Mucosa of descending colon (tissue), 3 donors: ENCODE measurements at regions of chr18 and their contacts with region 1.

Region 1: GRCh38 chr18:34661464-34662111 is 48.5 kb upstream of the DTNA start:
- DNase-seq: peak in 1 of 3 donors; percentile 28
- ATAC-seq: peak; percentile 74
- H3K4me3 ChIP-seq: no peak overlapping the region
- H3K4me1 ChIP-seq: no peaks in the 10 kb centered on the region
- CTCF ChIP-seq: peak; percentile 55

Region 2: DNA sequence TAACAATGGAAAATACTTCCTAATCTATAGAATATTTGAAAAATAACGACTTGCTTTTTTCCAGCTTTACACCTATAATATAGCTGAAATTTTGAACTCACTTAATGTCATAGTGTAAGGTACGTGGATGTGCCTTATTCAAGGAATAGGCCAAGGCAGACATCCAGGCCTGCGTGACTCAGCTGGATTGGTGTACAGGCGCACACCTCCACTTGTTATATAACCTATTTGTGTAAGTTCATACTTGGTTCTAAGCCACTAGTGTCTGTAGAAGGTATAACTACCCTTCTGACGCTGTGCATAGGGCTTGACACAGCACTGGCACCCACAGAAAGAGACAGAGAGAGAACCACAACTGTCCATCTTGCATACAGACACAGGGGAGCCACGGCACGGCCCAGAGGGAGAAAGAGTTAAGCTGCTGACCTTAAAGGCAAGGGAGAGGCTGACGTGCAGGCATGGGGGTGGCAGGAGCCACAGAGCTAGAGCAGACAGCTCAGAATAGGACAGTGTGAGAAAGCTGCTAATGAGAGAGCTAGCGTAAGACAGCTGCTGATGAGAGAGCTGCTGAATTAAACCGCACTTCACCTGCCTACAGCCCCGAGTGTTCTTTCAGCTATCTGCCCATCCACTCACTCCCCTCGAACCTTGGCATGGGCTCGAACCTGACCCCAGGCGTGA is 1237.2 kb before region 1 on chr18:
- intact Hi-C with region 1: no loop called
- DNase-seq: no peak
- ATAC-seq: no peak
- H3K4me3 ChIP-seq: no peak overlapping the region
- H3K4me1 ChIP-seq: no peaks in the 10 kb centered on the region
- CTCF ChIP-seq: no peak

Region 3: GRCh38 chr18:34773961-34774766 is 112.6 kb after region 1 on chr18:
- intact Hi-C with region 1: loop called in 1 of 2 experiments (anchors 10 kb)
- DNase-seq: peak in 1 of 3 donors; percentile 30
- ATAC-seq: peak; percentile 21
- H3K4me3 ChIP-seq: no peak overlapping the region
- H3K4me1 ChIP-seq: no peaks in the 10 kb centered on the region
- CTCF ChIP-seq: no peak

Region 4: GRCh38 chr18:34787931-34788532 is 126.4 kb after region 1 on chr18:
- intact Hi-C with region 1: loop called in 1 of 2 experiments (anchors 5 kb)
- DNase-seq: peak in 1 of 3 donors; percentile 69
- ATAC-seq: peak; percentile 81
- H3K4me3 ChIP-seq: no peak overlapping the region
- H3K4me1 ChIP-seq: no peaks in the 10 kb centered on the region
- CTCF ChIP-seq: peak; percentile 37